K562 (cell line): ENCODE measurements at regions of chr12 and their contacts with region 1.

Region 1: GRCh38 chr12:131830335-131830913 is 2.2 kb downstream of the MMP17 start:
- DNase-seq: peak; percentile 83 to 90 (median 86)
- ATAC-seq: peak; percentile 93
- H3K4me3 ChIP-seq: peak overlapping the region; percentile 54
- H3K27ac ChIP-seq: no peak overlapping the region
- H3K4me1 ChIP-seq: peaks cover 12 to 70% of the 10 kb centered on the region in 2 experiments; a peak in 4 of 5 replicates
- H3K27me3 ChIP-seq: peaks cover 3 to 14% of the 10 kb centered on the region in 2 experiments; a peak in 3 of 5 replicates
- CTCF ChIP-seq: peak; percentile 75 to 91 (median 84)
- EP300 ChIP-seq: no peak
- POLR2A ChIP-seq: no peak
- RAD21 ChIP-seq: peak; percentile 90 to 92

Region 2: DNA sequence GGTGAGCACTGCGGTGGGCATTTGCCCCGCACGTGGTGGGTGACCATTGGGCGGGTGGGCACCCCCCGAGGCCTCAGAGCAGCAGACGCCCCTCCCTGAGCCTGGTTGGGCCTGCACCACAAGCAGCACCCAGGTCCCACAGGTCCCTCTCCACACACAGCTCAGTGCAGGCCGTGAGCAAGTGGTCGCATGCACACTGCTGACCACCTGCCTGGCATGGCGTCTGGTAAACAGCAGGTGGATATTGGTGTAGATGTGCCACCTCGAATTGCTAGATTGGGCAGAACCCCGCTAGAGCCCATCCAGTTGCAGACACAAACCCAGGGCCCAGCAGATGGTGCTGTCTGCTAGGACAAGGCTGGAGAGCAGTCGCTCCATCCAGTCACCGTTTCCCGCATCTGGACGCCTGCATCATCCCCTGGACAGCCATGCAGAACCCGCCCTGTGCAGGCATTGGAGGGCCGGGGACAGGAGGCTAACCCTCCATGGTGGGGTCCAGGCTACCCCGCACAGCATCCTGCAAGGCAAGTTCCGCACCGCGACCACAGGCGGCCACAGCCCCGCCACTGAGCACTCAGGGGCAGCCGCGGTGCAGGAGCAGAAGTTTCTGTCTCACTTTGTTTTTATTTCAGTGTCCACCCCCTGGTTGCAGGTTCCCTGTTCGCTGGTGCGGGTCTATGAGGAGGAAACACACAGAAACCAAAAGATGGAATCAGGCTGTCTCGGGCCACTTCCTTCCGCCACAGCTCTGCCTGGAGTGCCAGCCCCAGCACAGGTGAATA is 1068.7 kb before region 1 on chr12:
- CTCF ChIA-PET with region 1: no interaction called
- POLR2A ChIA-PET with region 1: no interaction called
- in situ Hi-C with region 1: no loop called
- intact Hi-C with region 1: loop called (anchors 10 kb)
- DNase-seq: peak; percentile 47 to 72 (median 61)
- ATAC-seq: peak; percentile 94
- H3K4me3 ChIP-seq: no peak overlapping the region
- H3K27ac ChIP-seq: no peak overlapping the region
- H3K4me1 ChIP-seq: peaks cover 0 to 7% of the 10 kb centered on the region in 2 experiments; a peak in 1 of 5 replicates
- H3K27me3 ChIP-seq: peaks cover 10 to 34% of the 10 kb centered on the region in 2 experiments; a peak in 4 of 5 replicates
- CTCF ChIP-seq: peak; percentile 78 to 79 (median 78)
- EP300 ChIP-seq: no peak
- POLR2A ChIP-seq: no peak
- RAD21 ChIP-seq: peak; percentile 60 to 89

Region 3: GRCh38 chr12:130916251-130916911 is 914.0 kb before region 1 on chr12:
- CTCF ChIA-PET with region 1: interaction called, 3 read pairs
- POLR2A ChIA-PET with region 1: no interaction called
- in situ Hi-C with region 1: loop called (anchors 10 kb)
- intact Hi-C with region 1: loop called (anchors 10 kb)
- DNase-seq: peak; percentile 56 to 78 (median 62)
- ATAC-seq: peak; percentile 96
- H3K4me3 ChIP-seq: no peak overlapping the region
- H3K27ac ChIP-seq: no peak overlapping the region
- H3K4me1 ChIP-seq: peaks cover 2 to 3% of the 10 kb centered on the region in 2 experiments; a peak in 1 of 5 replicates
- H3K27me3 ChIP-seq: peaks cover 33 to 54% of the 10 kb centered on the region in 2 experiments
- CTCF ChIP-seq: peak; percentile 95 to 97 (median 96)
- EP300 ChIP-seq: no peak
- POLR2A ChIP-seq: no peak
- RAD21 ChIP-seq: peak; percentile 94 to 97

Region 4: GRCh38 chr12:131104463-131105350 is 725.7 kb before region 1 on chr12:
- CTCF ChIA-PET with region 1: interaction called, 11 read pairs
- POLR2A ChIA-PET with region 1: no interaction called
- in situ Hi-C with region 1: loop called (anchors 10 kb)
- intact Hi-C with region 1: loop called (anchors 10 kb)
- DNase-seq: peak; percentile 82 to 89 (median 84)
- ATAC-seq: peak; percentile 100
- H3K4me3 ChIP-seq: no peak overlapping the region
- H3K27ac ChIP-seq: no peak overlapping the region
- H3K4me1 ChIP-seq: peaks cover 0 to 27% of the 10 kb centered on the region in 2 experiments; a peak in 2 of 5 replicates
- H3K27me3 ChIP-seq: peaks cover 0 to 7% of the 10 kb centered on the region in 2 experiments; a peak in 1 of 5 replicates
- CTCF ChIP-seq: peak; percentile 94 to 98 (median 96)
- EP300 ChIP-seq: no peak
- POLR2A ChIP-seq: no peak
- RAD21 ChIP-seq: peak; percentile 92 to 93

Region 5: GRCh38 chr12:131621701-131622421 is 208.6 kb before region 1 on chr12:
- CTCF ChIA-PET with region 1: no interaction called
- POLR2A ChIA-PET with region 1: interaction called, 3 read pairs
- in situ Hi-C with region 1: no loop called
- intact Hi-C with region 1: loop called (anchors 5 kb)
- DNase-seq: peak in 1 of 4 experiments; percentile 28
- ATAC-seq: peak; percentile 6; the same call in 1 of the 3 replicates
- H3K4me3 ChIP-seq: no peak overlapping the region
- H3K27ac ChIP-seq: no peak overlapping the region; the same call in 2 of the 3 replicates
- H3K4me1 ChIP-seq: peaks cover 22 to 69% of the 10 kb centered on the region in 2 experiments
- H3K27me3 ChIP-seq: peaks cover 26 to 33% of the 10 kb centered on the region in 2 experiments; a peak in 4 of 5 replicates
- CTCF ChIP-seq: no peak
- EP300 ChIP-seq: no peak
- POLR2A ChIP-seq: no peak
- RAD21 ChIP-seq: no peak